Activated T-helper 2 cell treated with anti-CD3 and anti-CD28 coated beads, Interferon-gamma antibody, Interleukin-2, Interleukin-4, amounts not matched to agents 10 μg/mL and 5 μg/mL and 100 μg/mL, durations not matched to agents 14 hours and 24 hours and 36 hours (primary cell): ENCODE measurements at regions of chr1 and their contacts with region 1.

Region 1: DNA sequence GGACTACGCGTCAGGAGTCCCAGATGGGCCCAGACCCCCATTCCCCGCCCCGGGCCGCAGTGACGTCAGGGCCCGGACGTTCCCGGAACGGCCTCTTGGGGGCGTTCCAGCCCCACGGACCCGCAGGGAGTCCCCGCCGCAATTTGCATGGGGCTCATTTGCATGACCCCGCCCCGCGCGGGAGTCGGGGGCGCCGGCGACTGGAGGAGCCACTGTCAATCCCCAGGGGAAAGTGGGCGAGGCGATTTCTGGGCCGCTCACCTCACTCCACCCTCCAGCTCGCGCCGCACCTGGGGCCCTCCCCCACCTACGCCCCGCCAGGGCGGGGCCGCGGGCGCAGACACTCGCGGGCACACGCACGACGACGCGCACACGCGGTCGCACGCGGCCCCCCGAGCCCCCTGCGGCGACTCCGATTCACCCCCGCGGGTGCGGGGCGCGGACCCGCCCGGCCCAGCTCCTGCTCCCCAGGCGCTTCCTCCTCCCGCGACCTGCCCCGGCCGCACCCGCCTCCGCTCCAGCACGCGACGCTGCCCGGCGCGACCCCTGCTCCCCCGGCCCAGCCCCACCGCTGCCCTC is 13.2 kb downstream of the AGRN start:
- DNase-seq: peak; percentile 78
- H3K4me3 Mint-ChIP-seq: peak overlapping the region; percentile 39
- H3K27ac Mint-ChIP-seq: no peak overlapping the region
- H3K4me1 Mint-ChIP-seq: peaks cover 4% of the 10 kb centered on the region
- H3K27me3 Mint-ChIP-seq: peaks cover 18% of the 10 kb centered on the region

Region 2: DNA sequence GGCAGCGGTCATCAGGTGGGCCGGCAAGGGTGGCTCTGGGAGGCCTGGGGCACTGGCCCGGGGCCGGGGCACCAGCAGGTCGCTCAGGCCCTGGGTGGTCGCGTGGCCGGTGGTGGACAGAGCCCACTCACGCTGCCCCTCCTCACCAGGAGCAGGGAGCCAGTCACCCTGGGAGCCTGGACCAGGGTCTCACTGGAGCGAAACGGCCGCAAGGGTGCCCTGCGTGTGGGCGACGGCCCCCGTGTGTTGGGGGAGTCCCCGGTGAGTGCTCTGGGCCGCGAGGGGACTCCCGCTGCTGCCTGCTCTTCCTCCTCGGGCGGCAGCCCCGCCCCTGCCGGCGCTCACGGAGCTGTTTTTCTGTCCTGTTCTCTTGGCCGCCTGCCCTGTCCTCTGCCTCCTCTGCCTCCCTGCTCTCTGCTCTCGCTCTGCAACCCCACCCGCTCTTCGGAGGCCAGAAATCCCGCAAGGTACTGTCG is 17.5 kb after region 1 on chr1:
- intact Hi-C with region 1: no loop called
- DNase-seq: no peak
- H3K4me3 Mint-ChIP-seq: no peak overlapping the region
- H3K27ac Mint-ChIP-seq: no peak overlapping the region
- H3K4me1 Mint-ChIP-seq: no peaks in the 10 kb centered on the region
- H3K27me3 Mint-ChIP-seq: no peaks in the 10 kb centered on the region

Region 3: GRCh38 chr1:1291548-1292441 is 258.7 kb after region 1 on chr1:
- intact Hi-C with region 1: loop called (anchors 5 kb)
- DNase-seq: peak; percentile 51
- H3K4me3 Mint-ChIP-seq: no peak overlapping the region
- H3K27ac Mint-ChIP-seq: no peak overlapping the region
- H3K4me1 Mint-ChIP-seq: no peaks in the 10 kb centered on the region
- H3K27me3 Mint-ChIP-seq: no peaks in the 10 kb centered on the region